Heart right ventricle (tissue), 16 donors: ENCODE measurements at regions of chr9 and their contacts with region 1.

Region 1: GRCh38 chr9:71333321-71333720 is 211.9 kb upstream of the TRPM3 start:
- DNase-seq: no peak
- ATAC-seq: no peak
- H3K4me3 ChIP-seq: no peak overlapping the region
- H3K27ac ChIP-seq: no peak overlapping the region
- H3K4me1 ChIP-seq: no peaks in the 10 kb centered on the region
- H3K27me3 ChIP-seq: peaks cover 0 to 16% (median 0%) of the 10 kb centered on the region in 7 donors
- CTCF ChIP-seq: no peak

Region 2: GRCh38 chr9:71285191-71285656 is 48.1 kb before region 1 on chr9:
- intact Hi-C with region 1: loop called in 1 of 10 experiments (anchors 2 kb)
- DNase-seq: peak in 1 of 2 donors; percentile 46
- ATAC-seq: peak in 7 of 8 donors; percentile 49 to 74 (median 70)
- H3K4me3 ChIP-seq: no peak overlapping the region
- H3K27ac ChIP-seq: no peak overlapping the region
- H3K4me1 ChIP-seq: peaks cover 0 to 8% (median 0%) of the 10 kb centered on the region in 9 donors
- H3K27me3 ChIP-seq: no peaks in the 10 kb centered on the region
- CTCF ChIP-seq: peak; percentile 70 to 89 (median 83)

Region 3: DNA sequence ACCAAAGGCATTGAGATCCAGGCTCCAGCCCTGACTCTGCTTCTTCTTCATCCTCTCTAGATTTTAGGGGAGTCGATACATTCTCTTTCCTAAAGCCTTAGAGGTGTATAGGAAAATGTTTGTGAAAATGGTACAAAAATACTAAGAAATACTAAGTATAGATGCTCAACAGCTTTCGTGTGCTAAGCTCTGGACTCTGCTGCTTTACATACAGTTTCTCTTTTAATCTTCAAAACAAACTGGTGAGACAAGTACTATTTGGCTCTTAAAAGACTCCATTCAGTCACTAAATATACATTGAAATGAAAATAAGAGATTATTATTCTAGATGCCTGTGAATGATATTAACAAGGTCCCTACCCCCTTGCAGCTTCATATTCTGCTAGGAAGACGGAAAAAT is 37.4 kb before region 1 on chr9:
- intact Hi-C with region 1: loop called in 1 of 10 experiments (anchors 2 kb)
- DNase-seq: no peak
- ATAC-seq: no peak
- H3K4me3 ChIP-seq: no peak overlapping the region
- H3K27ac ChIP-seq: no peak overlapping the region
- H3K4me1 ChIP-seq: no peaks in the 10 kb centered on the region
- H3K27me3 ChIP-seq: no peaks in the 10 kb centered on the region
- CTCF ChIP-seq: no peak